ENCODE measurements at regions of chr2 and their contacts with region 1.

Region 1: GRCh38 chr2:96065381-96065930 is 30.7 kb upstream of the GPAT2 start:
- DNase-seq: no peak
- ATAC-seq: no peak
- H3K4me3 ChIP-seq: no peak overlapping the region
- H3K27ac ChIP-seq: no peak overlapping the region
- H3K4me1 ChIP-seq: no peaks in the 10 kb centered on the region
- H3K27me3 ChIP-seq: no peaks in the 10 kb centered on the region
- CTCF ChIP-seq: no peak
- POLR2A ChIP-seq: no peak

Region 2: GRCh38 chr2:97673182-97673914 is 1607.9 kb after region 1 on chr2:
- in situ Hi-C with region 1: loop called in 2 of 4 experiments (anchors 10 to 25 kb)
- intact Hi-C with region 1: no loop called
- DNase-seq: no peak
- ATAC-seq: no peak
- H3K4me3 ChIP-seq: no peak overlapping the region
- H3K27ac ChIP-seq: no peak overlapping the region
- H3K4me1 ChIP-seq: no peaks in the 10 kb centered on the region
- H3K27me3 ChIP-seq: no peaks in the 10 kb centered on the region
- CTCF ChIP-seq: no peak
- POLR2A ChIP-seq: no peak

Measured in gastrocnemius medialis (tissue), 4 donors.